ENCODE measurements at regions of chr13 and their contacts with region 1.

Region 1: DNA sequence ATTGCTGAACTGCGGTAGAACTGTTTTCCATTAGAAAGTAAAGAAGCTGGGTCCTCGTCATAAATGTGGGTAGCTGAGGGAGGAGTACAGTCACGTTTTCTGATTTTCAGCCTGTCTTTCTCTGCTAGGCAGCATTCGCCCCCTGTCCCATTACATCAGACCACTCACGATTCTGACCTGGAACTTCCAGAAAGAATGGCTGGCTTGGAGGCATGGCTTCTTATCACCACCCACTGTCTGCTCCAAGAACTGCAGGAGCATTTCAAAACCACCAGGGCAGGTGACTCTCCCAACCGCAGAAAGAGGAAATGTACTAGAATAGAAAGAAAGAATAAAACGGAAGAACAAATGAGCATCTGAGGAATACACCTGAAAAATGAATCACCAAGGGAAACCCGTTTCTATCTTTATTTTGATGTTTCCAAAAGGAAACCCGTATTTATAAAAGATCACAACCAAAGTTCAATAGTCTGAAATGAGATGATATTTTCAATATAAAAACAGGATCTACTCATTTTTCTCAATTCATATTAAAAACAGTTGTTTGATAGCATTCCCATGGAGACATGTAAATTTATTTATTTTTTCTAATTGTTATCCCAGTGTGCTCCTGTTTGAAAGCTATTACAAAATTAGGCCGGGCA is 22.1 kb upstream of the POMP start:
- DNase-seq: peak; percentile 59
- H3K4me3 Mint-ChIP-seq: no peak overlapping the region
- H3K27ac Mint-ChIP-seq: no peak overlapping the region
- H3K4me1 Mint-ChIP-seq: no peaks in the 10 kb centered on the region
- H3K27me3 Mint-ChIP-seq: no peaks in the 10 kb centered on the region
- CTCF ChIP-seq: peak; percentile 58

Region 2: DNA sequence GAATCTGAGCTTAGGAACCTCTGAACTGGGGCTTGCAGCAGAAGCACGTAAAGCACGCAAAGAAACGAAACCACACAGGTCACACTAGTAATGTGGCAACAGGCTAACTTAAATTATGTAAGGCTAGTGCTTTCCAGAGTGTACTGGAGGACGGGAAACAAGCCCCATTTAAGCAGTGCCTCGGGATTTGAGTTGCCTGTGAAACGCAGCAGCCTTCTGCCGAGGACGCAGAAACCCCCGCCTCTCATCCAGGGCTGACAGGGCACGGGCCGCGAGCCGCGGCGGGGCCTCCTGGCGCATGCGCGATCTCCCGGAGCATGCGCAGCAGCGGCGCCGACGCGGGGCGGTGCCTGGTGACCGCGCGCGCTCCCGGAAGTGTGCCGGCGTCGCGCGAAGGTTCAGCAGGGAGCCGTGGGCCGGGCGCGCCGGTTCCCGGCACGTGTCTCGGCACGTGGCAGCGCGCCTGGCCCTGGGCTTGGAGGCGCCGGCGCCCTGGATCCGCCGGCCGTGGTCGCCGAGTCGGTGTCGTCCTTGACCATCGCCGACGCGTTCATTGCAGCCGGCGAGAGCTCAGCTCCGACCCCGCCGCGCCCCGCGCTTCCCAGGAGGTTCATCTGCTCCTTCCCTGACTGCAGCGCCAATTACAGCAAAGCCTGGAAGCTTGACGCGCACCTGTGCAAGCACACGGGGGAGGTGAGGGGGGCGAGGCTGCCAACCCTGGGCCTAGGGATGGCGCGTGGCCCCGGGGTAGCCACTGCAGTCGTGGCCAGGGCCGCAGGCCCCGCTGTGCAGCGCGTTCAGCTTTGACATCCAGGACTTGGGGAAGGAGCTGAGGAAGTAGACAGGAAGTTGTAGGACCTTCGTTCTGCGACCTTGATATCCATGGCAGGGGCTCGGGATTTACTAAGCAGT is 1212.3 kb before region 1 on chr13 and contains the start of gene GTF3A:
- CTCF ChIA-PET with region 1: no interaction called
- intact Hi-C with region 1: no loop called
- DNase-seq: peak; percentile 83
- H3K4me3 Mint-ChIP-seq: peak within 1 kb of the TSS; percentile 82
- H3K27ac Mint-ChIP-seq: peak within 1 kb of the TSS; percentile 84
- H3K4me1 Mint-ChIP-seq: peaks cover 31% of the 10 kb centered on the region
- H3K27me3 Mint-ChIP-seq: peaks cover 5% of the 10 kb centered on the region
- CTCF ChIP-seq: no peak
- total RNA-seq, gene GTF3A: 89.6 and 95.0 TPM in 2 replicates

Region 3: GRCh38 chr13:28324181-28324789 is 312.5 kb before region 1 on chr13:
- CTCF ChIA-PET with region 1: no interaction called
- intact Hi-C with region 1: loop called (anchors 1 kb)
- DNase-seq: peak; percentile 64
- H3K4me3 Mint-ChIP-seq: no peak overlapping the region
- H3K27ac Mint-ChIP-seq: no peak overlapping the region
- H3K4me1 Mint-ChIP-seq: no peaks in the 10 kb centered on the region
- H3K27me3 Mint-ChIP-seq: no peaks in the 10 kb centered on the region
- CTCF ChIP-seq: peak; percentile 44

Region 4: DNA sequence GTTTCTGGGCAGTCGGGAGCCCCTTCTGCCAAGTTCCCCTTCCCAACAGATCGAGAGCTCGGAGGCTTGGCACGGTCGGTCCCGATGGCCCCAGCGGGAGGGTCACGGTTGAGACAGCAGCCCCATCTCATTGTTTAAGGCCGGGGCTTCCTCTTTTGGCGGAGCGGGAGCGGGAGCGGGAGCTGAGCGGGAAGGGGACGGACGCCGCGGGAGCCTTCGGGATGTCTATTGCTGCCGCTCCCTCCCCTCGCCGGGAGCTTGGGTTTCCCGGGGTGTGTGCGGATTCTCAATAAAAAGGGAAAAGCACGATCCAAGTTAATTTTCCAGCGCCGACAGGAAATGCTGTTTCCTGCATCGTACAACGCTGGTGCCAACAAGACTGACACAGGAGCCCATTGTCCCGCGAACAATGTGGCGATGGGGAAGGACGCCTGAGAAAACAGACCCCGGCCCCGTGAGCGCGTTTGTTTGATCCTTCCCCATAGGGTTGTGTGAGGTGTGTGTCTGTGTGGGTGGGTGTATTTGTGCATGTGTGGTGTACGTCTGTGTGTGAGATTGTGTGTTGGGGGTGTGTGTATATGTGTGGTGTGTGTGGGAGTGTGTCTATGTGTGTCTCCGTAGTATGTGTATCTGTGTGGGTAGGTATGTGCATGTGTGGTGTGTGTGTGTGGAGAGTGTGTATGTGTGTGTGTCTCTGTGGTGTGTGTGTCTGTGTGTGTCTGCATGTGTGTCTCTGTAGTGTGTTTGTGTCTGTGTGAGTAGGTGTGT is 105.5 kb before region 1 on chr13:
- CTCF ChIA-PET with region 1: no interaction called
- intact Hi-C with region 1: loop called (anchors 5 kb)
- DNase-seq: no peak
- H3K4me3 Mint-ChIP-seq: no peak overlapping the region
- H3K27ac Mint-ChIP-seq: no peak overlapping the region
- H3K4me1 Mint-ChIP-seq: no peaks in the 10 kb centered on the region
- H3K27me3 Mint-ChIP-seq: peaks cover 10% of the 10 kb centered on the region
- CTCF ChIP-seq: no peak